Activated naive CD4-positive, alpha-beta T cell treated with anti-CD3 and anti-CD28 coated beads for 36 hours (primary cell): ENCODE measurements at regions of chr6 and their contacts with region 1.

Region 1: DNA sequence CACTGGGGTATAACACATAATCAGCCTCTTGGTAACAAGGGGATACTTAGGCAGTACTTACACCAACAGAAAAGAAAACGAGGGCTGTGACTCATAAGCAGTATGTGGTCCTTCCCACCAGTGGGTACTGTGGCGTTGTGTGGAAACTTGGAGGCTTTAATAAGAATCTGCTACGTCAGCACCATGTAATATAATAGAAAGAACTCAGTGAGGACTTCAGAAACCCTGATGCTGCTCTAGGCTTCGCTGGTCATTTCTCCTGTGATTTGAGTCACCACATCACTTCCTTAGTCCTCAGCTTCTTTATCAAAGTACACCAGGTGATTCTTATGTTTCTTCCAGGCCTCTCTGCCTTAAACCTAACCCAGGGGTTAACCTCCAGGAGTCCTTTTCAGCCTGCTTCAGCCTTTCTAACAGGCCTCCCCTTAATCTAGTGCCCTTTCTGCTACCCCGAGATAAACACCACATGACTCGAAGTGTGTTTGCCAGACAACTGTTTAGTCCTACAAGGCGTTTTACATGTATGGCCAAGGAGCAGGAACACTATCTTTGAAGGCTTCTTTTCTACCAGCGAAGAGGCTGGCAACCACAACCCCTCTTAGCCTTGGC is 68.5 kb downstream of the FYN start:
- DNase-seq: peak; percentile 74
- H3K4me3 Mint-ChIP-seq: peak overlapping the region; percentile 5
- H3K27ac Mint-ChIP-seq: peak overlapping the region; percentile 92
- H3K4me1 Mint-ChIP-seq: peaks cover 92% of the 10 kb centered on the region
- H3K27me3 Mint-ChIP-seq: no peaks in the 10 kb centered on the region

Region 2: GRCh38 chr6:111793711-111794111 is 11.0 kb before region 1 on chr6:
- CTCF ChIA-PET with region 1: interaction called, 3 read pairs
- intact Hi-C with region 1: loop called (anchors 1 kb)
- DNase-seq: peak; percentile 60
- H3K4me3 Mint-ChIP-seq: peak overlapping the region; percentile 42
- H3K27ac Mint-ChIP-seq: peak overlapping the region; percentile 88
- H3K4me1 Mint-ChIP-seq: peaks cover 75% of the 10 kb centered on the region
- H3K27me3 Mint-ChIP-seq: no peaks in the 10 kb centered on the region

Region 3: GRCh38 chr6:111861431-111861885 is 56.7 kb after region 1 on chr6:
- CTCF ChIA-PET with region 1: interaction called, 4 read pairs
- intact Hi-C with region 1: loop called (anchors 1 kb)
- DNase-seq: peak; percentile 55
- H3K4me3 Mint-ChIP-seq: no peak overlapping the region
- H3K27ac Mint-ChIP-seq: peak overlapping the region; percentile 72
- H3K4me1 Mint-ChIP-seq: peaks cover 99% of the 10 kb centered on the region
- H3K27me3 Mint-ChIP-seq: no peaks in the 10 kb centered on the region

Region 4: GRCh38 chr6:111985202-111985731 is 180.5 kb after region 1 on chr6:
- CTCF ChIA-PET with region 1: interaction called, 3 read pairs
- intact Hi-C with region 1: loop called (anchors 2 kb)
- DNase-seq: peak; percentile 76
- H3K4me3 Mint-ChIP-seq: peak overlapping the region; percentile 9
- H3K27ac Mint-ChIP-seq: peak overlapping the region; percentile 94
- H3K4me1 Mint-ChIP-seq: peaks cover 87% of the 10 kb centered on the region
- H3K27me3 Mint-ChIP-seq: no peaks in the 10 kb centered on the region

Region 5: GRCh38 chr6:111997078-111997852 is 192.5 kb after region 1 on chr6:
- CTCF ChIA-PET with region 1: interaction called, 4 read pairs
- intact Hi-C with region 1: loop called (anchors 1 kb)
- DNase-seq: peak; percentile 89
- H3K4me3 Mint-ChIP-seq: peak overlapping the region; percentile 53
- H3K27ac Mint-ChIP-seq: peak overlapping the region; percentile 65
- H3K4me1 Mint-ChIP-seq: peaks cover 47% of the 10 kb centered on the region
- H3K27me3 Mint-ChIP-seq: no peaks in the 10 kb centered on the region